Calu3 (cell line): ENCODE measurements at regions of chr2 and their contacts with region 1.

Region 1: DNA sequence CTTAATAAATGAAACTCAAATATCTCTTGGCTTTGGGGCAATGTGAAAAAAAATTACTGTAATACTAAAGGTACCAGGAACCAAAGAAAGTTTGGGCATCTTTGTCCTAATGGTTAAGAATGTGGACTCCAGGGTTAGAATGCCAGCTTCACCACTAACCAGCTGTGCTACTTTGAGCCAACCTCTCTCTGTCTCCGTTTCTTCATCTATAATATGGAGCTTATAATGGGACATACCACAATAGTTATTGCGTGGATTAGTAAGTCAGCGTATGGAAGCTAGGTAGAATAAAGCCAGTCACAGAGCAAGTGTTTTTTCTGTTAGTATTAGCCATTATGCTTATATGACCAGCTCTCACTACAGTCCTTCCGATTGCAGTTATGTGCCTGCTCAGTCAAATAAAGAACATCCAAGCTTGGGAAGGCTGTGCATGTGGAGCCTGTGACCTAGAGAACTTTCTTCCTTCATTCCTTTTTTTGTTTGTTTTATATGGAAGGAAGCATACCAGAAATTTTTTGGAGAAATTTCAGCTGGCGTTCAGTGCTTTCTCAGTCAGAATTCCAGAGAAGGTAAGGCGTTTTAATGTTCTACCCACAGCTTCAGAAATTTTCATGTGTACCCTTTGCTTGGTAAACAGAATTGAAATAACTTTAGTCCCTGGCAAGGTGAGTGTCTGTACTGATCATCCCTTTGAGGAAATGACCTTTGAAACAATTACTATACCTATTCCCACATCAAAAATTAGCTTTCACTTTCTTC is 114.0 kb upstream of the RND3 start:
- DNase-seq: no peak
- H3K4me3 Mint-ChIP-seq: peak overlapping the region; percentile 34
- H3K27ac Mint-ChIP-seq: no peak overlapping the region
- H3K4me1 Mint-ChIP-seq: peaks cover 15% of the 10 kb centered on the region
- H3K27me3 Mint-ChIP-seq: no peaks in the 10 kb centered on the region
- CTCF ChIP-seq: no peak

Region 2: DNA sequence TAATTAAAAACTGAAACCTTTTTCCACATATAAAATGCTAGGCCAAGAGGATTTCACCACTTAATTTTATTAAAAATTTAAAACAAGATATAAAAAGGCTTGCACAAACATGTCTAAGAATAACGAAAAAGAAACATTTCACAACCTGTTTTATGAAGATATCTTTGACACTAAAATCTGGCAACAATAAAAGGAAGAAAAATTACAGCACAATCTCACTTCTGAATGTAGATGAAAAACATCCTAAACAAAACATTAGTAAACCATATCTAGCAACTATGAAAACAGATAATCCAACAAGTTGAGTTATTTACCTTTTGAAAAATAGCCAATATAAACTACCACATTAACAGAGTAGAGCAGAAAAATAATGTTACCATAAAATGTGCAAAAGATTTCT is 828.5 kb before region 1 on chr2:
- CTCF ChIA-PET with region 1: no interaction called
- intact Hi-C with region 1: loop called (anchors 10 kb)
- DNase-seq: no peak
- H3K4me3 Mint-ChIP-seq: no peak overlapping the region
- H3K27ac Mint-ChIP-seq: no peak overlapping the region
- H3K4me1 Mint-ChIP-seq: peaks cover 17% of the 10 kb centered on the region
- H3K27me3 Mint-ChIP-seq: no peaks in the 10 kb centered on the region
- CTCF ChIP-seq: no peak

Region 3: DNA sequence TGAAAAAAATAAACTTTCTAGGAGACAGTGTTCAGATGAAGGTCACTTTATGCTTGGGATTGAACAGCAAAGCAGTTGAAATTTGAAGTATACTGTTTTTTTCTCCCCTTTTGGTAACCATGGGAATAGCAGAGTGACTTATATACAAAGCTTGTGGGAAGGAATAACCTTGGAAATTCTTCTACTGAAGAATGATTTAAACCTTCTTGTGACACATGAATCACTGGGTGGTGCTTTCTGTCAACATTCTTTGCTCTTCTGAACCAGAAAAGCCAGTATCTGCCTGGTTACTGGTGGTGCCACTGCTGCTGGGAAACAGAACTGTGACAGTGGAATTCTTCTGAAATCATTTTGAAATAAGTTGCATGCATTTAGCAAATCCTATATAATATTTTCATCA is 74.6 kb before region 1 on chr2:
- CTCF ChIA-PET with region 1: interaction called, 3 read pairs
- intact Hi-C with region 1: loop called (anchors 2 kb)
- DNase-seq: peak; percentile 66
- H3K4me3 Mint-ChIP-seq: peak overlapping the region; percentile 33
- H3K27ac Mint-ChIP-seq: peak overlapping the region; percentile 98
- H3K4me1 Mint-ChIP-seq: peaks cover 44% of the 10 kb centered on the region
- H3K27me3 Mint-ChIP-seq: no peaks in the 10 kb centered on the region
- CTCF ChIP-seq: no peak

Region 4: GRCh38 chr2:150778828-150779227 is 177.4 kb after region 1 on chr2:
- CTCF ChIA-PET with region 1: no interaction called
- intact Hi-C with region 1: no loop called
- DNase-seq: no peak
- H3K4me3 Mint-ChIP-seq: no peak overlapping the region
- H3K27ac Mint-ChIP-seq: no peak overlapping the region
- H3K4me1 Mint-ChIP-seq: no peaks in the 10 kb centered on the region
- H3K27me3 Mint-ChIP-seq: no peaks in the 10 kb centered on the region
- CTCF ChIP-seq: no peak

Region 5: DNA sequence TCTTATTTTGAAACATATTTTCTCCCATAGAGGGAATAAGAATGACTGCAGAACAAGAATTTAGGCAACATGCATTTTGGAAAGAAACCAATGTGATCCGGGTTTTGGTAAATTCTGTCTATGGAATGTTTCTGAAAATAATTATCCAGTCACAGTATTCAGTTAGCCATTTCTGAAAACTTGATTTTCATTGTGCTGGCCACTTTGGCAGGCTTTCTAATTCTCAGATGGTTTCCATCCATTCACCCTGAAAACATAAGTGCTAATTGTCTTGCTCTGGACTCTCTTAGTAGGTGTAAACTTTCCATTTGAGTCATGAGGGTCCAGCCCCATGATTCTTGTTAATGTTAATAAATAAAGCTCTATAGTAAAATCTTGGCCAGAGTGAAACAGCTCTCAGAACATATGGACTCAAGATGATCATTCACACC is 483.7 kb after region 1 on chr2:
- CTCF ChIA-PET with region 1: no interaction called
- intact Hi-C with region 1: no loop called
- DNase-seq: no peak
- H3K4me3 Mint-ChIP-seq: no peak overlapping the region
- H3K27ac Mint-ChIP-seq: no peak overlapping the region
- H3K4me1 Mint-ChIP-seq: no peaks in the 10 kb centered on the region
- H3K27me3 Mint-ChIP-seq: peaks cover under 1% of the 10 kb centered on the region
- CTCF ChIP-seq: no peak